Left cardiac atrium (tissue), 4 donors: ENCODE measurements at regions of chr6 and their contacts with region 1.

Region 1: DNA sequence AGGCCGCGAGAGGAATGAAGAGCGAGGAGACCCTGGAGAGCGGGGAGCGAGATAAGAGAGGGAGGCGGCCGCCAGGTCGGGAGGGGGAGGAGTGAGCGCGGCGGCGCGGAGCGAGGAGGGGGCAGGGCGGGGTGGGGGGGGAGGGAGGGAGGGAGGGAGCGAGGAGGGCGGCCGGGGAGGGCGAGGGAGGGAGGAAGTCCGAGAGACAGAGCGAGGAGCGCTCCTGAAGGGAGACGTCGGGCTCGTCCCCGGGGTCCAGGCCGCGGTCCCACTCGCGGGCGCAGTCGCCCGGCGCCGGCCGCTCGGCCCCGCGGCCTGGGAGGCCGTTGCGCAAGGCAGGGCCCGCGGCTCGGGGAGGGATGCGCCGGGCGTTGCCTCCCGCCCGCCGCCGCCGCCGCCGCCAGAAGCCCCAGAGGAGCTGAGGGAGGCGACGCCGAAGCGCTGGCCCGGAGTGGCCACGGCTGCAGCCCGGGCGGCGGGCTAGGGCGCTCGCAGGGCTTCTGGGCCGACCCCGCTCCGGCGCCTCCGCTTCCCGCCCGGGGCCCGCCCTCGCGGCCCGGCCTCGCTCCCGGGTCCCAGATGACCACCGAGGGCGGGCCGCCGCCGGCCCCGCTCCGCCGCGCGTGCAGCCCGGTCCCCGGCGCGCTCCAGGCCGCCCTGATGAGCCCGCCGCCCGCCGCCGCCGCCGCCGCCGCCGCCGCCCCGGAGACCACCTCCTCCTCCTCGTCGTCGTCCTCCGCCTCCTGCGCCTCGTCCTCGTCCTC is at the start of gene FOXF2:
- DNase-seq: no peak
- ATAC-seq: peak in 1 of 2 donors; percentile 17
- total RNA-seq, gene FOXF2: 0.24 to 0.29 TPM

Region 2: DNA sequence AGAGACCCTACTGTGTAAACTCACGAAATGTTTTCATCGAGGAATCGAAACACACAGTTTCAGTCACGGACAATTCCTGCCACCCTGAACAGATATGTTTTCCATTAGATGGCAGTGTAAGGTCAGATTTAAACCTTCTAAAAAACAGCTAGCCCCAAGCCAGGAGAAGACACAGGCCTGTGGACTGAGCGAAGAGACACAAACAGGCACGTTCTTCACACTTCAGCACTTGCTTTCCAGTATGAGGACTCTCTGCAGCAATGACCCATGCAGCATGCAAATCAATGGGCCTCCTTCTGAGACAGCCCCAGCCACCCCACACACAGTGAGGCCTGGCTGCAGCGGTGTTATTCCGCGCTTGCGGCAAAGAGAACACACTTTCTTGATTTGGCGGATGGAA is 764.6 kb before region 1 on chr6:
- intact Hi-C with region 1: loop called in 1 of 2 experiments (anchors 5 kb)
- DNase-seq: no peak
- ATAC-seq: peak; percentile 44 to 82